Left lung (tissue), 14 donors: ENCODE measurements at regions of chr10 and their contacts with region 1.

Region 1: DNA sequence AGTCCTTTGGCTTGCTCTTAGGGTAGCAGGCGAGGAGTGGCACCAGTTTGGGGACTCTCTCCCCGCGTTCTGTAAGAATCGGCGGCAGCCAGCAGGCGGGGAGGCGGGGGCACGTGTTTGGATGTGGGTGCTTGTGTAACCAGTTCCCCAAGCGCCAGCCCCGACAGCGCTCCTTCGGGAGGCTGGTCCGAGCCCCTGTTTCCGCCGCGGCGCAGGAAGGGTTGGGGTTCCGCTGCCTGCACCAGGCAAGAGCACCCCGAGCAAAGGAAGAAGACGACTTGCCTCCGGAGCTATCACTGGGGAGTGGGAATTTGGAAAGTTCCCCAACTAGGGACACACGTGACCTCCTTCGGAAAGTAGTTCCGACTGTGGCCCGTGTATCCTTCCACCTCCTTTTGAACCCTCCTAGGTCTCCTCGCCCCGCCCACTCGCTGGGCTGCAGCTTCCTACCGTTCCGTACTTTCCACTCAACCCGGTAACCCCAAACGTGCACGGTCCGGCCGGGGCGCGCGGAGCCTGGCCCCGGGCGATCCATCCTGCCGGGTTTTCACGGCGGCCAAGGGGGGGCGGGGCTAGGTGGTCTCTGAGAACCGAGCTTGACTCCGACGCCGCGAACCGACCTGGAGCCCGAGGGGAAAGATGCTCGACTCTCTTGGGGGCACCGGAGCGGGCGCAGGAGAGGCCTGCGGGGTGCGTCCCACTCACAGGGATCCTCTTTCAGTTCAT is 1.2 kb downstream of the KLLN start:
- DNase-seq: peak; percentile 96 to 98 (median 97)
- ATAC-seq: peak; percentile 84
- H3K4me3 ChIP-seq: peak overlapping the region; percentile 76 to 81
- H3K27ac ChIP-seq: peak overlapping the region; percentile 97 to 99
- H3K4me1 ChIP-seq: peaks cover 0 to 17% of the 10 kb centered on the region in 2 donors
- H3K27me3 ChIP-seq: no peaks in the 10 kb centered on the region
- CTCF ChIP-seq: no peak

Region 2: GRCh38 chr10:87685832-87686574 is 176.1 kb before region 1 on chr10:
- intact Hi-C with region 1: no loop called
- DNase-seq: no peak
- ATAC-seq: peak; percentile 81
- H3K4me3 ChIP-seq: no peak overlapping the region
- H3K27ac ChIP-seq: no peak overlapping the region
- H3K4me1 ChIP-seq: peaks cover 0 to 19% of the 10 kb centered on the region in 2 donors
- H3K27me3 ChIP-seq: no peaks in the 10 kb centered on the region
- CTCF ChIP-seq: no peak

Region 3: GRCh38 chr10:88386821-88387773 is 525.0 kb after region 1 on chr10:
- intact Hi-C with region 1: loop called in 1 of 2 experiments (anchors 5 kb)
- DNase-seq: peak in 3 of 4 donors; percentile 33 to 90 (median 68)
- ATAC-seq: peak; percentile 89
- H3K4me3 ChIP-seq: no peak overlapping the region
- H3K27ac ChIP-seq: peak overlapping the region; percentile 66 to 77
- H3K4me1 ChIP-seq: peaks cover 13 to 51% of the 10 kb centered on the region in 2 donors
- H3K27me3 ChIP-seq: no peaks in the 10 kb centered on the region
- CTCF ChIP-seq: no peak

Region 4: GRCh38 chr10:88553116-88553752 is 691.1 kb after region 1 on chr10:
- intact Hi-C with region 1: loop called in 1 of 2 experiments (anchors 10 kb)
- DNase-seq: peak in 2 of 4 donors; percentile 37 to 76
- ATAC-seq: peak; percentile 99
- H3K4me3 ChIP-seq: no peak overlapping the region
- H3K27ac ChIP-seq: no peak overlapping the region
- H3K4me1 ChIP-seq: no peaks in the 10 kb centered on the region
- H3K27me3 ChIP-seq: no peaks in the 10 kb centered on the region
- CTCF ChIP-seq: peak; percentile 72 to 74